Caco-2 (cell line): ENCODE measurements at regions of chr15 and their contacts with region 1.

Region 1: DNA sequence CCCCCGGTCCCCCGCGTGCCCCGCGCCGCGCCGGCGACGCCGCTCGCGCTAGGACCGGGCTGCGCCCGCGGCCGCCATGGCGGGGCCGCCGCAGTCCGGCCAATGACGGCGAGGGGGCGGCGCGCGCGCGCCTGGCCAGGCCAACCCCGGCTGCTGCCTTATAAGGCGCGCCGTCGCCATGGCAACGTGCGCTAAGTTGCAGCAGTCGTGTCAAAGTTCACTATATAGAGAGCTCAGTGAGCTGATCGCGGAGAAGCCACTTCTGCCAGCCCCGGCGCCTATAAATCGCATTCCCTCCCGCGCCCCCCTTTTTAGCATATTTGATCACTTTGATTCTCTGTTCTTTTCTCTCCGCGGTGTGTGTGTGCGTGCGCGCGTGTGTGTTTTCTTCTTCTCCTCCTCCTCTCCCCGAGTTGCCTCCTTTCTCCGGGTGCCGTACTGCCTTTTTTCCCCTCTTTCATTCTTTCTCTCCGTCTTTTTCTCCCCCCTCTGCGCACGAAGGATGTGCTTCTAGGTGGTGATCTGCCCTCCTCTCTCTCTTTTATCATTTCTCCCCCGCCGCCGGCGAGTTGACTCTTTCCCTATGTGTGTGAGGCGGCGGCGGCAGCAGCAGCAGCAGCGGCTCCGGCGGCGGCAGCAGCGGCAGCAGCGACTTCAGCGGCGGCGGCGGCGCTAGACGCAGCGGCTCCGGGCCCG is at the start of gene NR2F2:
- DNase-seq: peak; percentile 96 to 97
- H3K4me3 ChIP-seq: peak within 1 kb of the TSS; percentile 84
- H3K4me3 Mint-ChIP-seq: peak within 1 kb of the TSS; percentile 83
- H3K27ac Mint-ChIP-seq: peak within 1 kb of the TSS; percentile 84
- H3K4me1 ChIP-seq: peaks cover 21% of the 10 kb centered on the region
- H3K4me1 Mint-ChIP-seq: peaks cover 19% of the 10 kb centered on the region
- H3K27me3 ChIP-seq: no peaks in the 10 kb centered on the region
- H3K27me3 Mint-ChIP-seq: no peaks in the 10 kb centered on the region
- CTCF ChIP-seq: no peak
- total RNA-seq, gene NR2F2: 134 and 140 TPM in 2 replicates

Region 2: GRCh38 chr15:95760501-95760900 is 570.1 kb before region 1 on chr15:
- CTCF ChIA-PET with region 1: no interaction called
- POLR2A ChIA-PET with region 1: no interaction called
- intact Hi-C with region 1: loop called (anchors 5 kb)
- DNase-seq: peak; percentile 51 to 66
- H3K4me3 ChIP-seq: no peak overlapping the region
- H3K4me3 Mint-ChIP-seq: no peak overlapping the region
- H3K27ac Mint-ChIP-seq: no peak overlapping the region
- H3K4me1 ChIP-seq: no peaks in the 10 kb centered on the region
- H3K4me1 Mint-ChIP-seq: peaks cover 12% of the 10 kb centered on the region
- H3K27me3 ChIP-seq: no peaks in the 10 kb centered on the region
- H3K27me3 Mint-ChIP-seq: no peaks in the 10 kb centered on the region
- CTCF ChIP-seq: peak; percentile 46 to 50

Region 3: DNA sequence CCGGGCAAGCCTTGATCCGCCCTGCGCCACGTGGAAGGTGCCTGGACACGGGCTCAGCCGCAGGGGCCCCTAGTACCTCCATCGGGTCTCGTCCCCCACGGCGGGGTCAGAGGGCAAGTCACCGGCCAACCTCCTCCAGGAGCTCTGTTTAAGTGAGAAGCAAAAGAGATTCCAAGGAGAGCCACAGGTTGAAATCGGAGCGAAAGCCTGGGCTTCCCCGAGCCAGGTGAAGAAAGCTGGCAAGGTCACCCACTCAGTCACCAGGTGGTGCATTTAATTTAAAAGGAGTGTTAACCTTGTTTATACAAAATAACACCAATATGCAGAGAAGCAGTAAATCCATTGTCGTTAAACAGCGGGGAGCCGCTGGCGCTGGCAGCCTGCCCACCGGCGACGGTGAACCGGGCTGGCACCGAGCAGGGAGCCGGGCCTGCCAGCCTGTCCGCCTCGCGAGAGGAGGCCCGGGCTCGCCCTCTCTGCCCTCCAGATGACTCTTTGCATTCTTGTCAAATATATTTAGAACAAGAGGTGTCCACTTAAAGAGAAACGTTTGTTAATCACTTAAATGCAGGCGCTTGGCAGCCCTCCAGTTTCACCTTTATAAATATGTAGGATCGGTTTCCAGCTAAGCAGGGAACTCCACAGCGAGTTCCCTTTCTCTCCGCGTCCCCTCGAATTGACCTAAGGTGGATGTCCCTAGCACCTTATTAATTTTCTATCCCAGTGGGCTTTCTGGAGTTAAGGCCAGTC is 277.4 kb before region 1 on chr15:
- CTCF ChIA-PET with region 1: no interaction called
- POLR2A ChIA-PET with region 1: no interaction called
- intact Hi-C with region 1: loop called (anchors 2 kb)
- DNase-seq: peak; percentile 9 to 42
- H3K4me3 ChIP-seq: no peak overlapping the region
- H3K4me3 Mint-ChIP-seq: peak overlapping the region; percentile 66
- H3K27ac Mint-ChIP-seq: peak overlapping the region; percentile 86
- H3K4me1 ChIP-seq: peaks cover 56% of the 10 kb centered on the region
- H3K4me1 Mint-ChIP-seq: peaks cover 20% of the 10 kb centered on the region
- H3K27me3 ChIP-seq: no peaks in the 10 kb centered on the region
- H3K27me3 Mint-ChIP-seq: no peaks in the 10 kb centered on the region
- CTCF ChIP-seq: no peak

Region 4: DNA sequence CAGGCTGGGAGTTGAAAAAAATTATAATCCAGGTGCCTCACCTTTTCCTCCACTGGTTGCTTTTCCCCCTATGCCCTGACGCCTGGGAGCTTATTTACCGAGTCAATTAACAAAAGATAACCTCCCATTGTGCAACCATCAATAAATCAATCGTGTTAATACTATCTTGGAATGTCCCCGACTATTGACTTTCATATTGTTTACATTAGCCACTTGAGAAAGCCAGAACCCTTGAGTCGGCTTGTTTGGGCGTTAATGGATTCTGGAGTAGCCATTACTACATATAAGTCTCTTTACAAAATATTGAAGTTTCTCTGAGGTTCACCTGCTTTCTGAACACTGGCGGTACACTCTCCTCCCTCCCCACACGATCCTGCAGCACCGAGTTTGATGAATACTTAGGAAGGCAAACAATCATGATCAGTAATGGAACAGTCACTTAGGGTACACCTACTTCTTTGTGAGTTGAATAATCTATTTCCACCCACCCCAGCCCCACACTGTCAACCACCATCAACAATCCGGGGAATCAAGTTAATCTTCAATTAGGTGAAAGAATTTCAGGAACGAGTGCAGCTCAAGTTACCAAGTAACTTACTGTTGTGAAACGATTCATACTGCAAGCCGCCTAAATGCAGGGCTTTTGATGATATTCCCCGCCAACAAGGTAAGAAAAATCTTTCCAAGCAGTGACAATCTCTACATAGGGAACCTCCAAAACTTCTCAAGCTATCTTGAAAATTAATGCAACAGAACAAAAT is 159.4 kb before region 1 on chr15:
- CTCF ChIA-PET with region 1: interaction called, 6 read pairs
- POLR2A ChIA-PET with region 1: interaction called, 9 read pairs
- intact Hi-C with region 1: loop called (anchors 1 kb)
- DNase-seq: peak; percentile 84 to 87
- H3K4me3 ChIP-seq: no peak overlapping the region
- H3K4me3 Mint-ChIP-seq: no peak overlapping the region
- H3K27ac Mint-ChIP-seq: no peak overlapping the region
- H3K4me1 ChIP-seq: peaks cover 46% of the 10 kb centered on the region
- H3K4me1 Mint-ChIP-seq: peaks cover 23% of the 10 kb centered on the region
- H3K27me3 ChIP-seq: no peaks in the 10 kb centered on the region
- H3K27me3 Mint-ChIP-seq: no peaks in the 10 kb centered on the region
- CTCF ChIP-seq: no peak

Region 5: DNA sequence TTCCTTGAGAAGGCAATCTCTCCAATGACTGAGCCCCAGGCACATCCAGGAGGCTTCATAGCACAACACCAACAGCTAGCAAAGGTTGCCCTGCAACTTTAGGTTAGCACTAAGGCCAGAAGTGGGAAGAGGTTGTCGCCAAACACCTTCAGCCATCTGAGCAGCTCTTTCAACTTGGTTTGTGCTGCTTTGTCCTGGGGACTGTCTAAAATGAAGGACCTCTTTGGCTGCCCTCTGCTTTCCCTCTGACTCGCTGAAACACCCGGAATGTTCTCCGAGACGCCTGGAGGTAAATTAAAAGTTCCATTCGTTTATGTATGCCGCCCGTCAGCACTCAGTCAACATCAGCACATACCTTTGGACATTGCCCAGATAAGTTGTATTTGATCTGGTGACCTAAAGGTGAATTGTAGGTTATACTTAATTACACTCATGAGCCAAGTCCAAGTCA is 121.3 kb before region 1 on chr15:
- CTCF ChIA-PET with region 1: no interaction called
- POLR2A ChIA-PET with region 1: no interaction called
- intact Hi-C with region 1: loop called (anchors 1 kb)
- DNase-seq: peak; percentile 85 to 92
- H3K4me3 ChIP-seq: no peak overlapping the region
- H3K4me3 Mint-ChIP-seq: peak overlapping the region; percentile 52
- H3K27ac Mint-ChIP-seq: peak overlapping the region; percentile 93
- H3K4me1 ChIP-seq: peaks cover 35% of the 10 kb centered on the region
- H3K4me1 Mint-ChIP-seq: peaks cover 24% of the 10 kb centered on the region
- H3K27me3 ChIP-seq: no peaks in the 10 kb centered on the region
- H3K27me3 Mint-ChIP-seq: no peaks in the 10 kb centered on the region
- CTCF ChIP-seq: no peak

Region 6: GRCh38 chr15:96340598-96341512 is 10.3 kb after region 1 on chr15:
- CTCF ChIA-PET with region 1: interaction called, 23 read pairs
- POLR2A ChIA-PET with region 1: interaction called, 14 read pairs
- intact Hi-C with region 1: loop called (anchors 1 kb)
- DNase-seq: no peak
- H3K4me3 ChIP-seq: no peak overlapping the region
- H3K4me3 Mint-ChIP-seq: no peak overlapping the region
- H3K27ac Mint-ChIP-seq: peak overlapping the region; percentile 45
- H3K4me1 ChIP-seq: peaks cover 17% of the 10 kb centered on the region
- H3K4me1 Mint-ChIP-seq: peaks cover 41% of the 10 kb centered on the region
- H3K27me3 ChIP-seq: no peaks in the 10 kb centered on the region
- H3K27me3 Mint-ChIP-seq: no peaks in the 10 kb centered on the region
- CTCF ChIP-seq: no peak